Dendritic cell treated with granulocyte-macrophage colony-stimulating factor and Interleukin-4, amounts not matched to agents 40 ng/mL and 50 ng/mL, for 4 days (primary cell): ENCODE measurements at regions of chr16 and their contacts with region 1.

Region 1: GRCh38 chr16:84970447-84971127 is 40.7 kb downstream of the ZDHHC7 start:
- H3K4me3 Mint-ChIP-seq: no peak overlapping the region
- H3K27ac Mint-ChIP-seq: no peak overlapping the region
- H3K4me1 Mint-ChIP-seq: peaks cover 35% of the 10 kb centered on the region
- H3K27me3 Mint-ChIP-seq: peaks cover 12% of the 10 kb centered on the region

Region 2: DNA sequence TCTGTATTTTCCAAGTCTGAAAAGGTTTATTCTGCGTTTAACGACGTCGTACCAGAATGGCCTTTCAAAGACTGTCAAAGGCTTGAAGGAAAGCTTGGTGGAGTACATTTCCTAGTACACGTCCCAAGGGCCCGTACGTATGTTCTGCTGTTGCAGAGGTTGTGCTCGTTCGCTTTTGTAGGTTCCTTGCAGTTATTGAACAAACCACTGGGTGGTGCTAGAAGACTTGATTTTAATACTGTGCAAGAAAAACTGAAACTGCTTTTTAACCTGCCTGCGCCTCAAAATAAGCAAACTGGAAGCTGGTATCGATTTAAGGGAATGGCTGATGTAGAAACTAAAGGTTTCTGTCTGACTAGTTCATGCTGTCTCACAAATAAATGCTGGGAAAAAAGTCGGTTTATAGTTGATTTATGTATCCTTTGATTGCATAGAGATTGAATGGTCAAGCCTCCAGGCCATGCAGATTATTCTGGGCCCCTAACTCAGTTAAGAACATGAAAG is 216.2 kb before region 1 on chr16:
- intact Hi-C with region 1: loop called (anchors 1 kb)
- H3K4me3 Mint-ChIP-seq: peak overlapping the region; percentile 53
- H3K27ac Mint-ChIP-seq: peak overlapping the region; percentile 62
- H3K4me1 Mint-ChIP-seq: peaks cover 72% of the 10 kb centered on the region
- H3K27me3 Mint-ChIP-seq: no peaks in the 10 kb centered on the region

Region 3: DNA sequence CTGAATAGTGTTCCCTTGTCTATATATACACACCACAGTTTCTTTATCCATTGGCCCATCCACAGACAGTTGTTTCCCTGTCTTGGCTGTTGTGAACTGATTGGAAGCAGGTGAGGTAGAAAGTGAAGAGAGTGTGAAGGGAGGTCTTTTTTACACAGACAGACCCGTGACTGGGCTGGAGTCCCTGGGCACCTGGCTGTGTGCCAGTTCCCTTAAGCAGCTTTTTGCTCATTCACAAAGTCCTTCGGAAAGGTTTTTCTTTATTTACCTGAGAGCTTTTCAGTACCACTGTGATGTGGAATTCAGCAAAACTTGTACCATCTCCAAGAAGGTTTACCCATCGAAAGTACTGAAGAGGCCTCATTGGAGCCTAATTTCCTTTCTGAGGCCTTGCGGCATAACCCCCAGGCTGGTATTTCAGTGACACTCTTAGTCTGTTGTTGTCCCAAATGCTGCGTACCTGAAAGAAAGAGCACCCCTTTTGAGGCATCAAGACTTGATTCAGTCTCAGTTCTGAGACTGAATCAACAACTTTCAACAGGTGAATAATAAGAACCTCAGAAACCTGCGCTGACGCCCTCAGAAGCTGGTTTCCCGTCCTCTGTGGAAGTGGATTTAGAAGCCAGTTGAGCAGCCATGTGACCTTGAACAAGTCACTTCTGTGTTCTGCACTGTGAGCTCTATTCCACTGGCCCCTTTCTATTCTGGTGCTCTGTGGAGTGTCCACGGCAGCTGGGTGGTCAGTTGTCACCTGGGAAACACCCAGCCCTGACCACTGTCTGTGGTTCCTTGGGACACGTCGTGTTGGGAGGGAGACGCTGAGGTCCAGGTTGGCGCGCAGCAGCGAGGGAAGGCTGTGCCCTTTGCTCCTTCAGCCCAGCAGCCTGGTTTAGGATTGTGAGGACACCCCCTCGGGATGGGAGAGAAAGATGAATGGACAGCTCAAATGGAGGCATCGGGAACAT is 204.7 kb before region 1 on chr16:
- intact Hi-C with region 1: no loop called
- H3K4me3 Mint-ChIP-seq: no peak overlapping the region
- H3K27ac Mint-ChIP-seq: no peak overlapping the region
- H3K4me1 Mint-ChIP-seq: peaks cover 22% of the 10 kb centered on the region
- H3K27me3 Mint-ChIP-seq: no peaks in the 10 kb centered on the region

Region 4: GRCh38 chr16:84925092-84925772 is 45.4 kb before region 1 on chr16:
- intact Hi-C with region 1: loop called (anchors 1 kb)
- H3K4me3 Mint-ChIP-seq: no peak overlapping the region
- H3K27ac Mint-ChIP-seq: no peak overlapping the region
- H3K4me1 Mint-ChIP-seq: peaks cover 18% of the 10 kb centered on the region
- H3K27me3 Mint-ChIP-seq: no peaks in the 10 kb centered on the region

Region 5: DNA sequence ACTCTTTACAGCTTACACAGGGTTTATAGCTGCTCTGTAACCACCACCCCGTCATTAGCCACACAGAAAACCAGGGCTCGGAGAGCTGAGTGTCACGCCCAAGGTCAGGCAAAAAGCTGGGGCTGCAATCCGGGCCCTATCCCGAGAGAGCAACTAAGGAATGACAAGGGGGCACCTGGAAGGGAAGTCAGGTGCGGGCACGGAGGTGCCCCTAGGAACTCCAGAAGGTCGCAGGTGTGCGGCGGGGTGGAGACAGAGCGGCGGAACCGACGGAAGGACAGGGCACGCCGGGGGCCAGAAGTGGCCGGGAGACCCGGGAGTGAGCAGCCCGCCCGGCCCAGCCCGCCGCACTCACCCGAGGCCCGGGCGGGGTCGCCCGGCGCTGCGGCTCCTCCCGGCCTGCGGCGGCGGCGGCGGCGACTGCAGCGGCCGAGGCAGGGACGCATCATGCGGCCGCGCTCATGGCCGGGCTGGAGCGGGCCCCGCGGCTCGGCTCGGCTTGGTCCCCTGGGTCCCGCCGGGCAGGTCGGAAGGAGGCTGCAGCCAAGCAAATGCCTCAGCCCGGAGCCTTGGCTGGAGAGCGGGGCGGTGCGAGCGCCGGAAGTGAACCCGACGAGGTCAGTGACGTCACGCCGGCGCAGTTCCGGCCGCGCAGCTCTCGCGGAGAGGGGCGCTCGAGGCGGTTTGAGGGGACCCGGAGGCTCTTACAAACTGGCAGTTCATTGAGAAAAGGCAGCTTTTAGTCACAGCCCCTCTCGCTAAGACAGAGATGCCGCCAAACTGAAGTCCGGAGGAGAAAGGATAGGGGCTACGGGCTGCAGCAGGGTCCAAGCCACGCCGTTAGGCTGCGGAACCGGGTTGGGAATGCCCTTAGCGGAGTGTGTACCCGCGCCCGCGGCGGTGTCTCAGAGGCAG is 40.6 kb after region 1 on chr16 and contains the start of gene ZDHHC7:
- intact Hi-C with region 1: no loop called
- H3K4me3 Mint-ChIP-seq: peak within 1 kb of the TSS; percentile 95
- H3K27ac Mint-ChIP-seq: peak within 1 kb of the TSS; percentile 95
- H3K4me1 Mint-ChIP-seq: peaks cover 59% of the 10 kb centered on the region
- H3K27me3 Mint-ChIP-seq: no peaks in the 10 kb centered on the region